ENCODE measurements at regions of chr14 and their contacts with region 1.

Region 1: DNA sequence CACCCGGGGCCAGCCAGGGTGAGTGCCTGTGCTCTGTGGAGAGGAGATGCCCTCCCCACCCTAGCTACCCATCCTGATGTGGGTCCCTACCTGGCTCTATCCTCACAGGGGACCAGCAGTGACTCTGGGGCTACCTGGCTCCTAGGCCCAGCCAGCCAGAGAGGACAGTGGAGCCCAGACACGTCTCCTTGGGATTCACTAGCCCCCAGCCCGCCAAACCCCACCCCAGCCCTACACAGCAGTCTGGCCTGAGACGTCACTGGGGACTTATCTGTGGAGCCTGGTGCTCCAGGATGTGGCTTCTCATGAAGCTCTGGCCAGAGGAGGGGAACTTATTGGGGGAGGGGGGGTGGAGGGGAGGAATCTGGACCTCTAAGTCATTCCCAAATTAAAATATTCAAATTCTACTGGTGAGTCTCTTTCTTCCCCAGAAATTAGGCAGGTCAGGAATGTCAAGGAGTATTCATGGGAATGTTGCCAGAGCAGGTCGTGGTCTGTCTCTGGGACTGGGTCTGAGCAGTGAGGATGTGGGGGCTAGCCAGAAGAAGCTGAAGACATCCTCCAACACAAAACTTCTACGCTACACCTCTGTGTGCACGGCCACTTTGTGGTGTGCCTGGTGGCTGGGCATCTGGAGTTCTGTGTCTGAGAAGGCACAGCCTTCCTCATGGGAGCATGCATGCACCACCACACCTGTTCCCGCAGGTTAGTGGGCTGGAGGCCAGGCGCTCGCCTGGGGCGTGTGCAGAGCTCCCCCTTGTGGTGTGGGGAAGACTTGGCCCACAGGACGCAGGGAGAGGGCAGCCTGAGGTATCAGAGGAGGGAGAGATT is 2.7 kb downstream of the CMTM5 start:
- DNase-seq: peak in 1 of 2 donors; percentile 70
- ATAC-seq: peak; percentile 19 to 57
- H3K4me3 ChIP-seq: no peak overlapping the region
- H3K27ac ChIP-seq: no peak overlapping the region
- H3K4me1 ChIP-seq: no peaks in the 10 kb centered on the region
- H3K27me3 ChIP-seq: no peaks in the 10 kb centered on the region
- CTCF ChIP-seq: peak; percentile 78 to 88 (median 81)
- POLR2A ChIP-seq: no peak

Region 2: DNA sequence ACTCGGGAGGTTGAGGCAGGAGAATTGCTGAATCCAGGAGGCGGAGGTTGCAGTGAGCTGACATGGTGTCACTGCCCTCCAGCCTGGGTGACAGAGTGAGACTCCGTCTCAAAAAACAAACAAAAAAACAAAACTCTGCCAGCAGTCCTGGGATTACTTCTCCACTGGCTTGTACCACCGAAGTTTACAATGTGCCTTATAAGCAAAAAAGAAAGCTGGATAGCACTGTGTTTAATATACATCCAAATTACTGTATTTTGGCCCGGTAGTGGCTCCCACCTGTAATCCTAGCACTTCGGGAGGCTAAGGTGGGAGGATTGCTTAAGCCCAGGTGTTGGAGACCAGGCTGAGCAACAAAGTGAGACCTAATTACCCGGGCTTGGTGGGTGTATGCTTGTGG is 110.4 kb before region 1 on chr14:
- in situ Hi-C with region 1: loop called in 2 of 4 experiments (anchors 10 kb)
- intact Hi-C with region 1: loop called (anchors 5 kb)
- DNase-seq: no peak
- ATAC-seq: no peak
- H3K4me3 ChIP-seq: no peak overlapping the region
- H3K27ac ChIP-seq: no peak overlapping the region
- H3K4me1 ChIP-seq: no peaks in the 10 kb centered on the region
- H3K27me3 ChIP-seq: no peaks in the 10 kb centered on the region
- CTCF ChIP-seq: no peak
- POLR2A ChIP-seq: no peak

Region 3: GRCh38 chr14:23327947-23328744 is 51.4 kb before region 1 on chr14:
- in situ Hi-C with region 1: loop called in 2 of 4 experiments (anchors 5 to 10 kb)
- intact Hi-C with region 1: loop called (anchors 1 kb)
- DNase-seq: peak; percentile 38 to 59
- ATAC-seq: peak; percentile 57 to 90
- H3K4me3 ChIP-seq: no peak overlapping the region
- H3K27ac ChIP-seq: no peak overlapping the region
- H3K4me1 ChIP-seq: peaks cover 2 to 7% of the 10 kb centered on the region in 2 donors
- H3K27me3 ChIP-seq: no peaks in the 10 kb centered on the region
- CTCF ChIP-seq: peak; percentile 79 to 85 (median 81)
- POLR2A ChIP-seq: no peak

Region 4: DNA sequence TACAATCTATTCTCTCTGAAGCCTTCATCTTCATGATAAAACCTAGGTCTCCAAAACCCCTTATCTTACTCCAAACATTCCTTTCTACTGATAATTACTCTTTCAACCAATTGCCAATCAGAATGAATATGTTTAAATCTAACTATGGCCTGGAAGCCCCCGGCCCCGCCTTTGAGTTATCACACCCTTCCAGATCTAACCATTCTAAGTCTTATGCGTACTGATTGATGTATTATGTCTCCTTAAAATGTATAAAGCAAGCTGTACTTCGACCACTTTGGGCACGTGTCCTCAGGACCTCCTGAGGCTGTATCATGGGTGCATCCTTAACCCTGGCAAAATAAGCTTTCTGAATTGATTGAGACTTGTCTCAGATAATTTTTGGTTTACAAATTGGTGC is 44.0 kb before region 1 on chr14:
- in situ Hi-C with region 1: loop called in 1 of 4 experiments (anchors 10 kb)
- intact Hi-C with region 1: no loop called
- DNase-seq: no peak
- ATAC-seq: no peak
- H3K4me3 ChIP-seq: no peak overlapping the region
- H3K27ac ChIP-seq: no peak overlapping the region
- H3K4me1 ChIP-seq: no peaks in the 10 kb centered on the region
- H3K27me3 ChIP-seq: no peaks in the 10 kb centered on the region
- CTCF ChIP-seq: no peak
- POLR2A ChIP-seq: no peak